OCI-LY7 (cell line): ENCODE measurements at regions of chrX and their contacts with region 1.

Region 1: DNA sequence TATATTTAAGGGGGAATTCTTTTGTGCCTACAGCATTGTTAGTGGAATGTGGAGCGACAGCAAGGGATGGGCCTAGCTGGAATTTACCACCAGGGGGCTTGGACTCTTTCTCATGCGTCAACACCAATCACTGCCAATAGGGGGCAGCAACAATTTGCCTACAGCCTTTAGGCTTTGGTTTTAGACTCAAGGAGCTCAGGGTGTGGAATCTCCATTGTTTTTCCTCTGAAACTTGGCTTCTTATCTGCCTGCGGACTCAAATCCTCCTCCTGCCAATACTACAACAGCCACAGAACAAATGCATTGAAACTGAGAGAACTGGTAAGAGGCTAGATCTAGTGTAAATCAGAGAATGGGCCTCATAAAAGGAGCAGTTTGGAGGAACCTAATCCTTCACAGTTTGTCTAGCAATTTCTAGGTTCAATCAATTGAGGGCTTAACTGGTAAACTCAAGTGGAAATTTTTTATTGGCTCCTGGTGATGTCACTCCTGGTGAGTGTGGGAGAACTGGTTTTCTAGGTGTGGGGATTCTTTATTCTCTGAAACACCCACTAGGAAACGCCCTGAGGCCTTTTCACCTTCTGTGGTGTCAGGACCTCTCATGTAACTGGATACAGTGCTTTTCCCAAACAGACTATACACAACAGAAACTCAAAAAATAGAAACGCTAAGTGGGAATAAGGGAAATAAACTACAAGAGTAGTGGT is 27.9 kb upstream of the TMSB4X start:
- DNase-seq: peak; percentile 81
- H3K4me3 ChIP-seq: no peak overlapping the region
- H3K27ac ChIP-seq: no peak overlapping the region
- H3K4me1 ChIP-seq: peaks cover 52% of the 10 kb centered on the region
- CTCF ChIP-seq: peak; percentile 97

Region 2: DNA sequence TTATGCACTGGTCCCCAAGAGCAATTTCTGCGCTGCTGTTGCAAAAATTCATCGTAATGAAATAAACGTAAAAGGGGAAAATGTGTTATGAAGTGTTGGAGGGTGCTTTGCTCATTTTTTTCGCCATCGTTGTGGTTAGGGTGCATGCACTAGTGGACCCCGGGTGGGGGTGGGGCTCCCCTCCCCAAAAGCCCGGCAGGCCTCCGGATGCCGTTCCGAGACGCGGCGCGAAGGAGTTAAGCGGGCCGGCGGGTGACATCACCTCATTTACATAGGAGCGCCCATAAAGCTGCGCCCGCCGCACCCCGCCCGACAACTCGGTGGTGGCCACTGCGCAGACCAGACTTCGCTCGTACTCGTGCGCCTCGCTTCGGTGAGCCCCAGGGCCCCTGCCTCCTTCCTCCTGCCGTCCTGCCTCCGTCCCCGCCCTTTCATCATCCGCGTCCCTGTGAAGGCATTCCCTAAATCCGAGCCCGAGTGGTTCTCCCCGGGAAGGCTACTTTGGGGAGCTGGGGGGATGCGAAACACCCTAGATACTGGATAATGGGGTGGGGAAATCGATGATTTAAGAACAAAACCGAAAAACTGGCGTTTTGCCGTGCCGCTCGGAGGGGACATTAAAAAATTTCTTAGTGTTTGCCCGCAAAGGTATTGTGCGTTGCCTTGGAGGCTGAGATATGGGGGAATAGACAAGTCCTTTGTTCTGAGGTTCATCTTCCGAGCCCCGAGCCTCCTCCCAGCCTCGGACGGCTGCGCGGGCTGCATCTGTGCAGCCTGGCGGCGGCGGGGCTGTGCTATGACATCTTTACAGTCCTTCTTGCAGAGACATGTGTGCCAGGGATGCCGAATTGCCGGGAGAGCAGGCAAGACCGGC is 28.0 kb after region 1 on chrX and contains the start of gene TMSB4X:
- CTCF ChIA-PET with region 1: no interaction called
- POLR2A ChIA-PET with region 1: interaction called, 17 read pairs
- intact Hi-C with region 1: loop called (anchors 1 kb)
- DNase-seq: peak; percentile 87
- H3K4me3 ChIP-seq: peak within 1 kb of the TSS; percentile 99
- H3K27ac ChIP-seq: peak within 1 kb of the TSS; percentile 90
- H3K4me1 ChIP-seq: peaks cover 72% of the 10 kb centered on the region
- CTCF ChIP-seq: no peak
- total RNA-seq, gene TMSB4X: 1,355 and 1,476 TPM in 2 replicates

Region 3: DNA sequence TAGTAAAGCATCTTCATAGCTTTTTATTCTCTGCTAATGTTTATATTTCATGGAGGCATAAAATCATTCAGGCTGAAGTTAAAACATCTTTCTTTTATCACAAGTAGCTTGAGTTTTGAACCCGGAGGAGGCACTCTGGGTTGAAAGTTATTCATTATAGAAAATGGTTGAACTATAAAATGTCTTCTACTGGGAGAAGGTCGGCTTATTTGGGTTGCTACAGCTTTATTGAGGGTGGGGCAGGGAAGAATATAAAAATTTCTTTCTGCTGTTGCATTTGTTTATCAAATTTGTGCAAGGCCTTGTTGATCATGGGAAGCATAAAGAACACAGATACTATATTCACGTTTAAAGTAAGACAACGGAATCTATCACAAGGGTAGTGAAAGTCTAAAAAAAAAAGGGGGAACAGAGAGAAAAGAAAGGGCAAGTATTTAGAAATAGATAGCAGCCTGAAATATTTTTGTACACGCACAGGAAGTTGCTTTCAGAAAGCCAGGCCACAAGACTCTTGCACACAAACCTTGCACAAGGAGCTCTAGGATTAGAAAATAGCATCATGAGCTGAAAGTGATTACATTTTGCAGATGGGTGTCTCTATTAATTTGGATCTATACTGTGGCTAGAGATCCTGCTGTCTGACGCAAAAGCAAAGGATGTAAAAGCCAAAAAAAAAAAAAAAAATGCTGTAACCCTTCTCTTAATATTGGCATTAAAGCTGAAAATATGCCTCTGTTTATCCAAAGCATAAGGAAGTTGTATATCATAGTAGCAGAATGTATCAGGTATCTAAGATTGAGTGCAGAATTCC is 134.6 kb after region 1 on chrX:
- CTCF ChIA-PET with region 1: interaction called, 5 read pairs
- POLR2A ChIA-PET with region 1: interaction called, 15 read pairs
- intact Hi-C with region 1: loop called (anchors 1 kb)
- DNase-seq: peak; percentile 70
- H3K4me3 ChIP-seq: peak overlapping the region; percentile 39
- H3K27ac ChIP-seq: peak overlapping the region; percentile 93
- H3K4me1 ChIP-seq: peaks cover 100% of the 10 kb centered on the region
- CTCF ChIP-seq: no peak

Region 4: GRCh38 chrX:13194291-13195103 is 247.5 kb after region 1 on chrX:
- CTCF ChIA-PET with region 1: no interaction called
- POLR2A ChIA-PET with region 1: no interaction called
- intact Hi-C with region 1: loop called (anchors 5 kb)
- DNase-seq: peak; percentile 42
- H3K4me3 ChIP-seq: no peak overlapping the region
- H3K27ac ChIP-seq: peak overlapping the region; percentile 1
- H3K4me1 ChIP-seq: peaks cover 15% of the 10 kb centered on the region
- CTCF ChIP-seq: no peak

Region 5: DNA sequence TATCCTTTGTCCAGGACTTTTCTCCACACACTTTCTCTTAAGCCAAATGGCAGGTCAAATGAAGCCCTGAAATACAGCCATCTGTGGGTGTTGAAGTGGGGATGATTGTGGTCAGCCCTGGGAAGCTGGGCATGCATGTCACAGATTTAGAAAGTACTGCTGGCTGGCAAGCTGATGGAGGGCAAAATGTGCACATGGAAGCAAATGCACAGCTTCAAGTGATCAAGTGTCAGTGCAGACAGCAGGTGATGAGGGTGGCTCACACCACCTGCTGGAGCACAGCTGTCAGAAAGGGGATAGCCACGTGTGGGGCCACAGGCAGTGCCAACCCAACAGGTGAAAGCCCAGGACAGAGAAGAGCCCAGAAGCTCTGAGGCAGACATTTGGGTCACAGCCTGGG is 413.2 kb after region 1 on chrX:
- CTCF ChIA-PET with region 1: no interaction called
- POLR2A ChIA-PET with region 1: interaction called, 3 read pairs
- intact Hi-C with region 1: loop called (anchors 10 kb)
- DNase-seq: peak; percentile 29
- H3K4me3 ChIP-seq: no peak overlapping the region
- H3K27ac ChIP-seq: no peak overlapping the region
- H3K4me1 ChIP-seq: no peaks in the 10 kb centered on the region
- CTCF ChIP-seq: no peak

Region 6: DNA sequence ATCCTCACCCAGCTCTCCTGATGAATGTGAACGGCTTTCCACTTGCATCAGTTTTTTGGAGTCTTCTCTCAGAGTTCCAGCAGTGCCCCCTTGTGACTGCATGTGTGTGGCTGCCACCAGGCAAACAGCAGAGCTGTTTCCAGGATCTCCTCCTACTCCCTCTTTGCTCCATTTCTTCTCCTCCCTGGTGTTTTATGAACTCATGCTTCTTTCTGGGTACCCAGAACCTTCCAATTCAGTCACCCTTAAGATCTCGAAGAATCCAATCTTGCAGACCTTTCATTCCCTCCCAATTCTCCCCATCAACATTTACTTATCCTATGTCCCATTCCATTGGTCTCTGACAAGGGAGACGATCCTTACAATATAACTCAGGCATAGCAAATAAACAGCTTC is 699.2 kb after region 1 on chrX:
- CTCF ChIA-PET with region 1: no interaction called
- POLR2A ChIA-PET with region 1: no interaction called
- intact Hi-C with region 1: loop called (anchors 2 kb)
- DNase-seq: peak; percentile 28
- H3K4me3 ChIP-seq: no peak overlapping the region
- H3K27ac ChIP-seq: no peak overlapping the region
- H3K4me1 ChIP-seq: no peaks in the 10 kb centered on the region
- CTCF ChIP-seq: peak; percentile 66